Left cardiac atrium (tissue), 4 donors: ENCODE measurements at regions of chr11 and their contacts with region 1.

Region 1: DNA sequence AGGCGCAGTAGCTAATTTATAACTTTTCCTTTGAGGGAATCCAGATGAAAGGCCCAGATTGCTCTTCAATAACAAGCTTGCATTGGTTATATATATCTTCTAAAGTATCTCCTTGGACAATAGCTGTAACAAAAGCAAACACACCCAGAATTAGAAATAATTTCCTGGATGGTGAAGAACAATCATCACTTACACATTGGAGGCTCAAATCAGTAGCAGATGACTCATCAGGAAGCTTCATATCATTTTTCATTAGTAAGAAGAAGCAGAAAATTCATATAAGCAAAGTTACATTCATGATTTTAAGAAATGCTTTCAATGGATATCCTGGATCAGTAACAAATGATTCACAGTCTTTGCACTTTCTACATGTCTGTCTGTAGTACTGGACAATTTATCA is 173.6 kb upstream of the CCDC90B start:
- DNase-seq: no peak
- ATAC-seq: no peak

Region 2: DNA sequence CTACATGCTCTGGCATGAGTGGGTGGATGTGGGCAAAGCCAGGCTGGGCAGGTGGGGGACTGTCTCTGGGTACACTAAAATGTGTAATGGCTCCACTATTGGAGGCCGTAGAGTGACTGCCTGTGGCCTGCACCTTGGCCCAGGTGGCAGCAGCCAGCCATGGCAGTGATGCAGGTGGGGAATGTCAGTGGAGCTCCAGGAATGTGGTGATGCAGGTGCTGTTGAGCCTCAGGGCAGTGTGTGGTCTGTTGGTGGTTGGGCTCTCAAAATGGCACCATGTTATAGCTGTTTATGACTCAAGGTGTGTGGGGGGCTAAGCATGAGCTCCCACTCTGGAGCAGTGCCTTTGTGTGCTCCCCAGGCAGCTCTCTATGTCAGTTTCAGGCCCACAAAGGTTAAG is 133.5 kb before region 1 on chr11:
- intact Hi-C with region 1: loop called in 1 of 2 experiments (anchors 10 kb)
- DNase-seq: no peak
- ATAC-seq: no peak